ENCODE measurements at regions of chr7 and their contacts with region 1.

Region 1: DNA sequence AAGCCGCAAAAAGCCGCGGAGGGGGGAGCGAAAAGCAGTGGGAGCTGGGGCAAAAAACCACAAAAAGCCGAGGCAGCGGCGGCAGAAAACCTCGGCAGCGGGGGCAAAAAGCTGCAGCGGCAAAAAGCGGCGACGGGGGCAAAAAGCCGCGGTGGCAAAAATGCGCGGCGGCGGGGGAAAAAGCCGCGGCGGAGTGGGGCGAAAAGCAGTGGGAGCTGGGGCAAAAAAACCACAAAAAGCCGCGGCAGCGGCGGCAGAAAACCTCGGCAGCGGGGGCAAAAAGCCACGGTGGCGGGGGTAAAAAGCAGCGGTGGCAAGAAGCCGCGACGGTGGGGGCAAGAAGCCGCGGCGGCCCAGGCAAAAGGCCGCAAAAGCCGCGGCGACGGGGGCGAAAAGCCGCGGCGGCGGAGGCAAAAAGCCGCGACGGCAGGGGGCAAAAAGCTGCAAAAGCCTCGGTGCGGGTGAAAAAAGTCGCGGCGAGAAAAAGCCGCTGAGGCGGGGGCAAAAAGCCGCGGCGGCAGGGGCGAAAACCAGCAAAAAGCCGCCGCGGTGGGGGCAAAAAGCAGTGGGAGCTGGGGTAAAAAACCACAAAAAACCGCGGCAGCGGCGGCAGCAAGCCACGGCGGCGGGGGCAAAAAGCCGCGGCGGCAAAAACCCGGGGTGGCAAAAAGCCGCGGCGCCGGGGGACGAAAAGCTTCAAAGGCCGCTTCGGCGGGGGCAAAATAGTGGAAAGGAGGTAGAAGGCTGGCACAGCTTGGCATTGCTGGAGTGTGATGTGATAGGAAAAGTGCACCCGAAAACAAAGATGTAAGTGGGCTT is 135.9 kb downstream of the ZNF92 start:
- DNase-seq: peak in 4 of 5 donors; percentile 2 to 51 (median 26)
- H3K4me3 ChIP-seq: peak overlapping the region; percentile 32
- H3K4me3 Mint-ChIP-seq: peak overlapping the region; percentile 63 to 83 (median 80)
- H3K27ac ChIP-seq: no peak overlapping the region
- H3K27ac Mint-ChIP-seq: peak overlapping the region in 4 of 8 donors; percentile 3 to 43 (median 12)
- H3K4me1 ChIP-seq: peaks cover 5% of the 10 kb centered on the region
- H3K4me1 Mint-ChIP-seq: peaks cover 5 to 7% (median 7%) of the 10 kb centered on the region in 3 donors
- H3K27me3 ChIP-seq: peaks cover 6% of the 10 kb centered on the region
- H3K27me3 Mint-ChIP-seq: peaks cover 21 to 24% of the 10 kb centered on the region in 2 donors

Region 2: DNA sequence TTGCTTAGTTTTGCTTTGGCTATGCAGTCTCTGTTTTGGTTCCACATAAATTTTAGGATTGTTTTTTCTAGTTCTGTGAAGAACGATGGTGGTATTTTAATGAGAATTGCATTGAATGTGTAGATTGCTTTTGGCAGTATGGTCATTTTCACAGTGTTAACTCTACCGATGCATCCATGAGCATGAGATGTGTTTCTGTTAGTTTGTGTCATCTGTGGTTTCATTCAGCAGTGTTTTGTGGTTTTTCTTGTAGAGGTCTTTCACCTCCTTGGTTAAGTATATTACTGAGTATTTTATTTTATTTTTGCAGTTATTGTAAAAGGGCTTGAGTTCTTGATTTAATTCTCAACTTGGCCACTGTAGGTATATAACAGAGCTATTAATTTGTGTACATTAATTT is 214.2 kb before region 1 on chr7:
- CTCF ChIA-PET with region 1: no interaction called
- POLR2A ChIA-PET with region 1: no interaction called
- DNase-seq: no peak
- H3K4me3 ChIP-seq: no peak overlapping the region
- H3K4me3 Mint-ChIP-seq: peak overlapping the region in 1 of 7 donors; percentile 4
- H3K27ac ChIP-seq: no peak overlapping the region
- H3K27ac Mint-ChIP-seq: no peak overlapping the region
- H3K4me1 ChIP-seq: no peaks in the 10 kb centered on the region
- H3K4me1 Mint-ChIP-seq: peaks cover 7 to 10% (median 9%) of the 10 kb centered on the region in 3 donors
- H3K27me3 ChIP-seq: no peaks in the 10 kb centered on the region
- H3K27me3 Mint-ChIP-seq: peaks cover 0 to 16% of the 10 kb centered on the region in 2 donors

Region 3: GRCh38 chr7:65373608-65374351 is 135.8 kb before region 1 on chr7 and contains the start of gene ZNF92:
- CTCF ChIA-PET with region 1: no interaction called
- POLR2A ChIA-PET with region 1: interaction called, 21 read pairs
- DNase-seq: peak; percentile 91 to 97 (median 94)
- H3K4me3 ChIP-seq: peak within 1 kb of the TSS; percentile 82
- H3K4me3 Mint-ChIP-seq: peak within 1 kb of the TSS; percentile 94 to 100 (median 98)
- H3K27ac ChIP-seq: peak within 1 kb of the TSS; percentile 90
- H3K27ac Mint-ChIP-seq: peak within 1 kb of the TSS; percentile 88 to 99 (median 94)
- H3K4me1 ChIP-seq: peaks cover 31% of the 10 kb centered on the region
- H3K4me1 Mint-ChIP-seq: peaks cover 46 to 54% (median 53%) of the 10 kb centered on the region in 3 donors
- H3K27me3 ChIP-seq: no peaks in the 10 kb centered on the region
- H3K27me3 Mint-ChIP-seq: no peaks in the 10 kb centered on the region
- total RNA-seq, gene ZNF92: 13.4 to 14.2 TPM